HCT116 (cell line): ENCODE measurements at regions of chrX and their contacts with region 1.

Region 1: DNA sequence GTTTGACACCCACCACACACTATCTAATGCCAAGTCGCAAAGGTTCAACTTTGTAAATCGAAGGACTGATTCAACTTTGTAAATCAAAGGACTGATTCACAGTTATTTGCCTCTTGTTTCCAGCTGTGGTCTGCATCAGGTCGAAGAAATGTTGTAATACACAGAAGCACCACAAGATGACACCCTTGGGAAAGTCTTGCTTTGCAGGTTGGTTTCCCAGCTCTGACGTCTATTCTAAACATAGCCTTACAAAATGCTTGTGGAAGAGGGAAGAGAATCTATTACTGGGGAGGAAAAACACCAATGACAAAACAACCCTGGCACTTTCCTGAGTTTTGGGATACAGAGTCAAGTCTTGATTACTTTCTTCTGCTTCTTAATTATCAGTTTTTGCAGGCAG is 35.3 kb downstream of the SUPT20HL1 start:
- DNase-seq: peak; percentile 24
- ATAC-seq: peak; percentile 75
- H3K4me3 ChIP-seq: no peak overlapping the region
- H3K27ac ChIP-seq: no peak overlapping the region
- H3K4me1 ChIP-seq: no peaks in the 10 kb centered on the region
- H3K27me3 ChIP-seq: peaks cover 2% of the 10 kb centered on the region; the same call in 1 of the 2 replicates
- CTCF ChIP-seq: peak; percentile 45 to 65 (median 60); a peak in 4 of 6 replicates
- POLR2A ChIP-seq: no peak
- RAD21 ChIP-seq: peak; percentile 84

Region 2: DNA sequence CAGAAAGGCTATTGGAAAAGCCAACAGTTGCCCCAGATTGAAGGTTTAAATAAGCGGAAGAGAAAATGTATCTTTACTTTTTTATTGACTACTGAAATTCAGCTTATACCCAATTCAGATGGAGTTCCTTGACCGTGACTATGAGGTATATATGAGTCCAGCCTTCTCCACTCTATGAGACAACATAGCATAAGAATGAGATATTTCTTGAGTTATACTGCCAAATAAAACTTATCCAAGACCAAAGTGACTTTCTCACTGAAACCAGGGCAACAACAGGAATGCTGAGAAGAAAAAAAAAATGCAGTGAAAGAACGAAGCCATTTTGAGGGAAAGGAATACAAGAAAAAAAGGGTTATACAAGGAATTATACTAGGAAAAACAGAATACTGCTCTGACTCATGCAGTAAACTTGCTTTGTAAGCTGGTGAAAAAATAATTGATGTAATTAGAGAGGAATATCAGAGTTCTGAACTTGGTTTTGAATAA is 53.0 kb after region 1 on chrX:
- CTCF ChIA-PET with region 1: no interaction called
- POLR2A ChIA-PET with region 1: no interaction called
- RAD21 ChIA-PET with region 1: no interaction called
- intact Hi-C with region 1: no loop called
- DNase-seq: no peak
- ATAC-seq: no peak
- H3K4me3 ChIP-seq: no peak overlapping the region
- H3K27ac ChIP-seq: no peak overlapping the region
- H3K4me1 ChIP-seq: no peaks in the 10 kb centered on the region
- H3K27me3 ChIP-seq: no peaks in the 10 kb centered on the region
- CTCF ChIP-seq: no peak
- POLR2A ChIP-seq: no peak
- RAD21 ChIP-seq: no peak

Region 3: DNA sequence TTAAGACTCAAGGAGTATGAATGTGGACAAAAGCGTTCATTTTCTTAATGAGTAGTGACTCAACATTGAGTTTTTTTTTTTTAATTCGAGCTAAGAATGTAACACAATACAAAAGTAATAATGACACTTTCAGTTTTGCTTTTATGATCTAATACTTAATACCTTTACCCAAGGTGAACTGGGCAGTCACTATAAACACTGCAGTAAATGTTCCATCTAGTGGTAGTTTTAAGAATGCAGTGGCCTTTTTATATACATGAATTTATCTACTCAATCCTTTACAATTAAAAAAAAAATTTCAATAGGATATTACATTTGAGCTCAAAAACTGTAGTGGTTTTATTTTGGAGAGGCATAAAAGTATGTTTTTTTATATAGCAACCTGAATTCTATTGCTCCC is 103.2 kb after region 1 on chrX:
- CTCF ChIA-PET with region 1: interaction called, 54 read pairs
- POLR2A ChIA-PET with region 1: no interaction called
- RAD21 ChIA-PET with region 1: interaction called in 1 of 2 experiments, 3 read pairs
- intact Hi-C with region 1: loop called (anchors 1 kb)
- DNase-seq: no peak
- ATAC-seq: no peak
- H3K4me3 ChIP-seq: no peak overlapping the region
- H3K27ac ChIP-seq: no peak overlapping the region
- H3K4me1 ChIP-seq: no peaks in the 10 kb centered on the region
- H3K27me3 ChIP-seq: no peaks in the 10 kb centered on the region
- CTCF ChIP-seq: peak; percentile 29 to 51 (median 35); a peak in 4 of 6 replicates
- POLR2A ChIP-seq: no peak
- RAD21 ChIP-seq: peak; percentile 52

Region 4: DNA sequence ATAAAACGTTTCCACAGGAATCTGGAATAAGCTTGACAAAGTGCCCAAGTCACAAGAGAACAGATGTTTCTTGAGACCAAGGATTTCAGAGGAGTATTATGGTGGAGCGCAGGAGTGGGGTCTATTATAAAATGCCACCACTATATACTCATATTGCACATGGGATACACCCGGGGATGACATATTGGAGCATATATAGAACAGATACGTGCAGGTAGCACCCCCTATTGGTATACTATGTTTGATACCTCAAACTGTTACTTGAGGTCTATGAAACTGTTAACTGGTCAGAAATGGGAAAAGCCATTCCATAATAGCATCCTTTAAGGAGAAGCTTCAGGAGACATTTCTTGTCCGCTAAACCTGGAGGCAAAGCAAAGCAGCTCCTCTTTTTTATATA is 165.3 kb after region 1 on chrX:
- CTCF ChIA-PET with region 1: no interaction called
- POLR2A ChIA-PET with region 1: no interaction called
- RAD21 ChIA-PET with region 1: no interaction called
- intact Hi-C with region 1: loop called (anchors 2 kb)
- DNase-seq: peak; percentile 6
- ATAC-seq: peak; percentile 83
- H3K4me3 ChIP-seq: no peak overlapping the region
- H3K27ac ChIP-seq: no peak overlapping the region
- H3K4me1 ChIP-seq: no peaks in the 10 kb centered on the region
- H3K27me3 ChIP-seq: no peaks in the 10 kb centered on the region
- CTCF ChIP-seq: peak; percentile 23 to 40 (median 34); a peak in 4 of 6 replicates
- POLR2A ChIP-seq: no peak
- RAD21 ChIP-seq: peak; percentile 58